Activated CD4-positive, alpha-beta T cell treated with anti-CD3 and anti-CD28 coated beads for 36 hours (primary cell): ENCODE measurements at regions of chr3 and their contacts with region 1.

Region 1: DNA sequence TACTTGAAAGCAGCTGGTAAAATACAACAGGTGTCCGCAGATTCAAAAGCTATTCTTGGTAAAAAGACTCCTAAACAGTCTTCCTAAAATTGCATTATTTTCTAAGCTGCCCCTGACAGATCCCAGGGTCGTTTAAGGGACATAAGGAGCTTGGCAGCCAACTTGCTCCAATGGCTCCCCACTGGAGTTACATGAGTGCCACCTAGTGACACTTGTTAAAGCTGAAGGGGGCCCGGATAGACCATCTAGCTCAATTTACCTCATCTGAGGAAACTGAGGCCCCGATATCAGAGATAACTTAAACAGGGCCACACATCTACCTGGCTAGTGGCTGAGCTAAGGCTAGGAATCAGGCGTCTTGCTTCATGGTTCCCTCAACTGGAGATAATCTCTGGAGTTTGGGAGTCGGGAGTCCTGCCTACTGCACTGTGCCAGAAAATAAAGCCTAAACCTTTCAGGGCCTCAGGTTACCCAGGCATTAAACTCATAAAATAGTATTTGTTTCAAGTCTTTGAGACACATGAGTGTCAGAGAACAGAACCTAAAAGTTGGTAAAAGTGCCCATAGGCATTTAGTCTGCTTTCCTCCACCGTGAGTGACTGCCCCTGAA is 6.5 kb upstream of the TBC1D23 start:
- DNase-seq: peak; percentile 58
- ATAC-seq: peak; percentile 80
- H3K4me3 Mint-ChIP-seq: no peak overlapping the region
- H3K27ac Mint-ChIP-seq: no peak overlapping the region
- H3K4me1 Mint-ChIP-seq: peaks cover 11% of the 10 kb centered on the region
- H3K27me3 Mint-ChIP-seq: peaks cover 2% of the 10 kb centered on the region

Region 2: GRCh38 chr3:99833617-99834205 is 420.6 kb before region 1 on chr3:
- CTCF ChIA-PET with region 1: interaction called, 12 read pairs
- POLR2A ChIA-PET with region 1: no interaction called
- intact Hi-C with region 1: loop called (anchors 1 to 2 kb)
- DNase-seq: no peak
- ATAC-seq: no peak
- H3K4me3 Mint-ChIP-seq: no peak overlapping the region
- H3K27ac Mint-ChIP-seq: no peak overlapping the region
- H3K4me1 Mint-ChIP-seq: peaks cover 8% of the 10 kb centered on the region
- H3K27me3 Mint-ChIP-seq: no peaks in the 10 kb centered on the region